CD8-positive, alpha-beta memory T cell (primary cell): ENCODE measurements at regions of chr4 and their contacts with region 1.

Region 1: GRCh38 chr4:40264995-40265909 is 68.4 kb downstream of the RHOH start:
- DNase-seq: peak; percentile 37 to 86 (median 67)
- H3K4me3 ChIP-seq: peak overlapping the region; percentile 55
- H3K4me3 Mint-ChIP-seq: peak overlapping the region; percentile 75 to 90 (median 81)
- H3K27ac ChIP-seq: peak overlapping the region; percentile 43
- H3K27ac Mint-ChIP-seq: peak overlapping the region; percentile 81 to 99 (median 97)
- H3K4me1 ChIP-seq: peaks cover 61% of the 10 kb centered on the region
- H3K4me1 Mint-ChIP-seq: peaks cover 41 to 76% (median 53%) of the 10 kb centered on the region in 3 donors
- H3K27me3 ChIP-seq: no peaks in the 10 kb centered on the region
- H3K27me3 Mint-ChIP-seq: no peaks in the 10 kb centered on the region

Region 2: GRCh38 chr4:39998659-39999345 is 266.4 kb before region 1 on chr4:
- CTCF ChIA-PET with region 1: no interaction called
- POLR2A ChIA-PET with region 1: no interaction called
- DNase-seq: no peak
- H3K4me3 ChIP-seq: no peak overlapping the region
- H3K4me3 Mint-ChIP-seq: no peak overlapping the region
- H3K27ac ChIP-seq: no peak overlapping the region
- H3K27ac Mint-ChIP-seq: no peak overlapping the region
- H3K4me1 ChIP-seq: no peaks in the 10 kb centered on the region
- H3K4me1 Mint-ChIP-seq: no peaks in the 10 kb centered on the region
- H3K27me3 ChIP-seq: no peaks in the 10 kb centered on the region
- H3K27me3 Mint-ChIP-seq: peaks cover 0 to 5% of the 10 kb centered on the region in 2 donors

Region 3: GRCh38 chr4:40247350-40247749 is 17.9 kb before region 1 on chr4:
- CTCF ChIA-PET with region 1: interaction called, 6 read pairs
- POLR2A ChIA-PET with region 1: interaction called, 10 read pairs
- DNase-seq: peak in 4 of 5 donors; percentile 41 to 87 (median 56)
- H3K4me3 ChIP-seq: no peak overlapping the region
- H3K4me3 Mint-ChIP-seq: peak overlapping the region; percentile 3 to 82 (median 67)
- H3K27ac ChIP-seq: no peak overlapping the region
- H3K27ac Mint-ChIP-seq: peak overlapping the region; percentile 40 to 97 (median 96)
- H3K4me1 ChIP-seq: peaks cover 81% of the 10 kb centered on the region
- H3K4me1 Mint-ChIP-seq: peaks cover 65 to 91% (median 80%) of the 10 kb centered on the region in 3 donors
- H3K27me3 ChIP-seq: no peaks in the 10 kb centered on the region
- H3K27me3 Mint-ChIP-seq: no peaks in the 10 kb centered on the region

Region 4: GRCh38 chr4:40283968-40284367 is 18.7 kb after region 1 on chr4:
- CTCF ChIA-PET with region 1: interaction called, 13 read pairs
- POLR2A ChIA-PET with region 1: interaction called, 4 read pairs
- DNase-seq: peak; percentile 58 to 93 (median 78)
- H3K4me3 ChIP-seq: no peak overlapping the region
- H3K4me3 Mint-ChIP-seq: peak overlapping the region in 6 of 7 donors; percentile 64 to 89 (median 72)
- H3K27ac ChIP-seq: no peak overlapping the region
- H3K27ac Mint-ChIP-seq: peak overlapping the region; percentile 88 to 98 (median 94)
- H3K4me1 ChIP-seq: peaks cover 55% of the 10 kb centered on the region
- H3K4me1 Mint-ChIP-seq: peaks cover 48 to 77% (median 58%) of the 10 kb centered on the region in 3 donors
- H3K27me3 ChIP-seq: no peaks in the 10 kb centered on the region
- H3K27me3 Mint-ChIP-seq: no peaks in the 10 kb centered on the region

Region 5: DNA sequence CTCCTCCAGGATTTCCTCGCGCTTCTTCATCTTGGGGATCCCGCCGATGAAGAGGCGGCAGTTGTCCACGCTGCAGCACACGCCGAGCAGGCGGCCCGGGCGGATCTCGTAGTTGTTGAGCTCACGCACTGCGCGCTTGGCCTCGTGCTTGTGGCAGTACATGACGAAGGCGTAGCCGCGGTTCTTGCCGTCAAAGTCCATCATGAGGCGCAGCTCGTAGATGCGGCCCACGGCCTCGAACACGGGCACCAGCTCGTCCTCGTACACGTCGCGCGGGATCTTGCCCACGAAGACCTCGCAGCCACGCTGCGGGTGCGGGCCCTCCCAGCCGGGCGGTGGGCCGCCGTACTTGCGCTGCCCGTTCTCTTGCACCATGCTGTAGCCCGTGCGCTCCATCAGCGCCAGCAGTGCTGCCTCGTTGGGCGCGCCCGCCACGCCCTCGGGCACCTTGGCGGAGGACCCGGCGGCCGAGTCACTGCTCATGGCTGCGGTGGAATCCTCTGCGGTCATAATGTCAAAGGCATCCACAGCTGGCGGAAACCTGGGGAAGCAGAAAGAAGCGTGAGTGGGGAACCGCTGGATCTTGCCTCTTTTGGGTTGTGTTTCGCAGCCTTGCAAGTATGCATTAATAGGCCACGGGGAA is 173.3 kb after region 1 on chr4:
- CTCF ChIA-PET with region 1: no interaction called
- POLR2A ChIA-PET with region 1: no interaction called
- DNase-seq: no peak
- H3K4me3 ChIP-seq: no peak overlapping the region
- H3K4me3 Mint-ChIP-seq: no peak overlapping the region
- H3K27ac ChIP-seq: no peak overlapping the region
- H3K27ac Mint-ChIP-seq: no peak overlapping the region
- H3K4me1 ChIP-seq: peaks cover 35% of the 10 kb centered on the region
- H3K4me1 Mint-ChIP-seq: peaks cover 4 to 10% (median 8%) of the 10 kb centered on the region in 3 donors
- H3K27me3 ChIP-seq: no peaks in the 10 kb centered on the region
- H3K27me3 Mint-ChIP-seq: peaks cover 0 to 11% of the 10 kb centered on the region in 2 donors

Region 6: GRCh38 chr4:40502934-40503333 is 237.7 kb after region 1 on chr4:
- CTCF ChIA-PET with region 1: no interaction called
- POLR2A ChIA-PET with region 1: no interaction called
- DNase-seq: no peak
- H3K4me3 ChIP-seq: no peak overlapping the region
- H3K4me3 Mint-ChIP-seq: no peak overlapping the region
- H3K27ac ChIP-seq: no peak overlapping the region
- H3K27ac Mint-ChIP-seq: peak overlapping the region in 1 of 8 donors; percentile 76
- H3K4me1 ChIP-seq: peaks cover 7% of the 10 kb centered on the region
- H3K4me1 Mint-ChIP-seq: peaks cover 0 to 3% (median 0%) of the 10 kb centered on the region in 3 donors
- H3K27me3 ChIP-seq: no peaks in the 10 kb centered on the region
- H3K27me3 Mint-ChIP-seq: peaks cover 2 to 4% of the 10 kb centered on the region in 2 donors